ENCODE measurements at regions of chr6 and their contacts with region 1.

Region 1: GRCh38 chr6:138833816-138834539 is 38.1 kb downstream of the ECT2L start:
- DNase-seq: peak; percentile 38 to 74
- ATAC-seq: peak; percentile 81 to 96 (median 93)
- H3K4me3 ChIP-seq: no peak overlapping the region
- H3K27ac ChIP-seq: peak overlapping the region in 9 of 10 donors; percentile 70 to 83 (median 79)
- H3K4me1 ChIP-seq: peaks cover 0 to 21% (median 6%) of the 10 kb centered on the region in 9 donors
- H3K27me3 ChIP-seq: no peaks in the 10 kb centered on the region
- CTCF ChIP-seq: no peak

Region 2: GRCh38 chr6:138773177-138774091 is 60.5 kb before region 1 on chr6 and contains the start of gene CCDC28A:
- intact Hi-C with region 1: no loop called
- DNase-seq: peak; percentile 91 to 96
- ATAC-seq: peak; percentile 97 to 99 (median 98)
- H3K4me3 ChIP-seq: peak within 1 kb of the TSS; percentile 69 to 96 (median 84)
- H3K27ac ChIP-seq: peak within 1 kb of the TSS; percentile 90 to 99 (median 96)
- H3K4me1 ChIP-seq: peaks cover 2 to 30% (median 22%) of the 10 kb centered on the region in 9 donors
- H3K27me3 ChIP-seq: no peaks in the 10 kb centered on the region
- CTCF ChIP-seq: peak in 1 of 9 donors; percentile 9
- total RNA-seq, gene CCDC28A: 4.9 to 15.6 (median 9.5) TPM

Region 3: DNA sequence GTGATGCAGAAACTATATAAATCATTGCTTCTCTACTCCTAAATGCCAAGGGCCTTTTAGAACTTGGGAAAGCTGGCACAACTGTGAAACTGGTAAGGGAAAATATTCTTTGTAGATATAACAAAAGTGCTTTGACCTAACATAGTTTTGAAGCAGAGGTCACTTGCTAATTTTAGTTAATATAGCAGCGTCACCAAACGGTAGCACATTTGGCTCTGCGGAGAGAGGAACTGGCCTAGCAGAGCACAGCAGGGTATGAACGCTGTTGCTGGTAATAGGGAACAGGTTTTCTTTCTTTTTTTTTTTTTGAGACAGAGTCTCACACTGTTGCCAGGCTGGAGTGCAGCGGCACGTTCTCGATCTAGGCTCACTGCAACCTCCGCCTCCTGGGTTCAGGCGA is 29.3 kb after region 1 on chr6:
- intact Hi-C with region 1: loop called in 2 of 10 experiments (anchors 2 to 5 kb)
- DNase-seq: peak; percentile 13 to 41
- ATAC-seq: peak; percentile 72 to 95 (median 84)
- H3K4me3 ChIP-seq: no peak overlapping the region
- H3K27ac ChIP-seq: peak overlapping the region; percentile 60 to 90 (median 78)
- H3K4me1 ChIP-seq: peaks cover 0 to 25% (median 13%) of the 10 kb centered on the region in 9 donors
- H3K27me3 ChIP-seq: no peaks in the 10 kb centered on the region
- CTCF ChIP-seq: no peak

Measured in heart right ventricle (tissue), 16 donors.